Calu3 (cell line): ENCODE measurements at regions of chr6 and their contacts with region 1.

Region 1: DNA sequence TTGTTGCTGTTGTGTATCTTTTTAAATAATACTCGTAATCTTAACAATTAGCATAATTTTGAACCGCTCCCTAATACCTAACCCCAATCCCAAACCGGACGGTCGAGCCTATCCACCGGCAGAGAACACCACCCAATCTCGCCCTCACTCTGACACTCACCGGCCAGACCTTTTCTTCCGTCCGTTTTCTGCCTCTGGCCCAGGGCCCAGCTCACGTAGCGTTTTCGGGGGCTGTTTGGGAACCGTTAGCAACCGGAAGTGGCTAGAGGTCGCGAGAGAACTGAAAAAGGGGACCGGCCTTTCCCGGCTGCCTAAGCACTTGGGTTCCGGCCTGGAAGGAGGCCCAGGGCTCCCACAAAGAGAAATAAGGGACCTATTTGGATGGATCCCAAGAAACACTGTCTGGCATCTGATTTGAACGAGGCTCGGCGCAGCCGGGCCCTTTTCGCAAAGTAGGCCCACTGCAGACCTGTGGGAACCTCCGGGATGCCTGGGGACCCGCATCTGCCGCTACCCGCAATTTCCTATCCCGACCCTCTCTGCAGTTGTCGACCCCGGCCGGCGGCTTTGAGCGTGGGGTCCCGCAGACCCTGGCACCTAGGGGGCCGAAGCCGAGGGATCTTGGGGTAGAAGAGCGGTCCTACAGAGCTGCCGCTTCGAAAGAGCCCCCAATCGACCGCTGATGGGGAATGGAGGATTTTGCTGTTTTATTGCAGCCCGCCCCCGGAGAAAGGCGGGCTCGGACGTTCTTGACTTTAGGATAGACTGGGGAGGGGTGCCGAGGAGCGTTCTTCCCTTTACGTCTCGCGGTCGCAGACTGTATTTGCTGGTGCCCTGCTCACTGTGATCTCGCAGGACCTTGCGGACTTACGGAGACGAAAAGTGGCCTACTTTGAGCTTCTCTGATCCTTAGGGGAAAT is 4.8 kb upstream of the ZKSCAN8 start:
- DNase-seq: peak; percentile 90
- H3K4me3 Mint-ChIP-seq: peak overlapping the region; percentile 97
- H3K27ac Mint-ChIP-seq: peak overlapping the region; percentile 93
- H3K4me1 Mint-ChIP-seq: peaks cover 30% of the 10 kb centered on the region
- H3K27me3 Mint-ChIP-seq: no peaks in the 10 kb centered on the region
- CTCF ChIP-seq: no peak

Region 2: DNA sequence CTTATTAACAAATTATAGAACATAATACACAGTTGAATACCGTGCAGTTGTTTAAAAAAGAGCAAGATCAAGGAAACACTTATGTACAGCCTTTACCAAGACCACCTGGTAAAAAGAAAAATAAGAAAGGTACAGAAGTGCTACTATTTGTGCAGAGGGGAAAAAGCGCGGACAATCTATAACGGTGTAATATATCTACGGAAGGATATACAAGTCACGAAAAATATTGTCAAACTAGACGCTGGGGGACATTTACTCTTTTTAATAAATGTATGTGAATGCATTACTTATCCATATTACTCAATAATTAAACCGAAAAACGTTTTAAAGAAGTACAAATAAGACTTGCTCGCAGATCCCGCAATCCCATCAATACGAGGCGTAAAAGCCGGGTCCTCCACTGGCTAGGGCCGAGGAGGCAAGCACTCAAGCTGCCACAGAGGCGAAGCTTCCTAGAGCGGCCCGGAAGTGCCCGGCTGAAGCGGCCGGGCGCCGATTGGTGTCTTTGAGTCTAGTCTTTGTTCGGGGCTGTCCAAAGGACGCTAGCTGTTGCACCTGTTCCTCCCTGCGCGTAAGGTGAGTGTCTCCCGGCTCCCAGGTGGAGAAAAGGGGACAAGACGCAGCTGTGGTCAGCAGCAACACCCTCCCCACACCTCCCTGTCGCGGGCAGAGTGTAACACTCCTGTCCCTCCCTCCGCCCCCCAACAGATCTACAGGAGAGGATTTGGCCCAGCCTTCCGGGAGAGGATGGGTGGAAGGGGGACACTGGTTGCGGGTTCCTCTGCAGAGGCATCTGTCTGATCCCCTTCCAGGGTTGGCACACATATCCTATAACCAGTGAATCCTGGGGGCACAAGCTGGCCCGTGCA is 12.5 kb before region 1 on chr6 and contains the start of gene ZSCAN16:
- CTCF ChIA-PET with region 1: interaction called, 13 read pairs
- intact Hi-C with region 1: loop called (anchors 1 kb)
- DNase-seq: peak; percentile 91
- H3K4me3 Mint-ChIP-seq: peak within 1 kb of the TSS; percentile 85
- H3K27ac Mint-ChIP-seq: peak within 1 kb of the TSS; percentile 48
- H3K4me1 Mint-ChIP-seq: peaks cover 22% of the 10 kb centered on the region
- H3K27me3 Mint-ChIP-seq: no peaks in the 10 kb centered on the region
- CTCF ChIP-seq: no peak
- total RNA-seq, gene ZSCAN16: 14.2 and 15.9 TPM in 2 replicates

Region 3: GRCh38 chr6:28212510-28213212 is 75.8 kb after region 1 on chr6:
- CTCF ChIA-PET with region 1: no interaction called
- intact Hi-C with region 1: loop called (anchors 2 kb)
- DNase-seq: peak; percentile 90
- H3K4me3 Mint-ChIP-seq: peak overlapping the region; percentile 71
- H3K27ac Mint-ChIP-seq: peak overlapping the region; percentile 68
- H3K4me1 Mint-ChIP-seq: peaks cover 17% of the 10 kb centered on the region
- H3K27me3 Mint-ChIP-seq: no peaks in the 10 kb centered on the region
- CTCF ChIP-seq: no peak

Region 4: GRCh38 chr6:28225056-28225834 is 88.4 kb after region 1 on chr6 and contains the start of gene ZSCAN9:
- CTCF ChIA-PET with region 1: no interaction called
- intact Hi-C with region 1: loop called (anchors 2 kb)
- DNase-seq: peak; percentile 90
- H3K4me3 Mint-ChIP-seq: peak within 1 kb of the TSS; percentile 93
- H3K27ac Mint-ChIP-seq: peak within 1 kb of the TSS; percentile 73
- H3K4me1 Mint-ChIP-seq: no peaks in the 10 kb centered on the region
- H3K27me3 Mint-ChIP-seq: no peaks in the 10 kb centered on the region
- CTCF ChIP-seq: no peak
- total RNA-seq, gene ZSCAN9: 24.6 and 25.8 TPM in 2 replicates

Region 5: DNA sequence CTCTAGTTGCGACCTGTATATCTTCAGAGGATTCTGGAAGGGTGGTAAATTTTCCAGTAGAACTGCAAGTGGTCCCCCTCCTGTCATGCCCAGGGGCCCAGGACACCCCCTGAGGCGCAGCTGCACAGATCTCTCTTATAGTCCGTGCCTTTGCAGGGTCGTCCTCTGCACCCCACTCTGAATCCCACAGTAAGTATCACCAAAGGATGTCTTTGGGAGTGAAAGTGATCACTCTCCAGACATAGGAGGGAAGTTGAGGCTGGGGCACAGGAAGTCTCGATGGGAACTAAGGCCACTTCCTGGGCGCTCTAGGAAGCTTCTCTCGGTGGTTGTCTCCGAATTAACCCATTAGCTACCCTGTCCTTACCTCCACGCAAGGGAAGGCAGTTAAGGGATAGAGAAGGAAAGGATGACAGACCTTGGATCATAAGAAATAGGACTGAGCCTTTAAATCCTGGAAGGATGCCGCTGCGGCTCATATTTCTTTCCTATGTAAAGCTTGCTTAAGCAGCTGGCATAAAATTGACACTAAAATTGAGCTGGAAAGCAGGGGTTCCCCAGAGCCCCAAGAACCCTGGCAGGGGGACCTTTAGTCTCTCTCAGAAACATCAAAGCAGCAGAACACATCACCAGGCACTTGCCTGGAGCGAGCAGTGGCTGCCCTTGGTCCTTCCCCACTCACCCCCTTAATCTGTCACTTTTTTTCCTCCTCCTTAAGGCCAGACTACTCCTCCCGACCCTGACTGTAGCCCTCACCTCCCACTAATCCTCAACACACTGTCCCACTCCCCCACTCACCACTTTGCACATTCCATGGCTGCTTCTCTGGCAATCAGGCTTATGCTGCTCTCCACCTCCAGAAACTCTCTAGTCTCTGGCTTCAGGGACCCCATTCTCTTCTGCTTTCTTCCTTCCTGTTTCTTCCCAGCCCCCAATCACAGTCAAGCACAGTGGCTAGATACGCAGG is 115.4 kb after region 1 on chr6 and contains the start of gene ZKSCAN4:
- CTCF ChIA-PET with region 1: interaction called, 5 read pairs
- intact Hi-C with region 1: loop called (anchors 2 kb)
- DNase-seq: peak; percentile 84
- H3K4me3 Mint-ChIP-seq: peak within 1 kb of the TSS; percentile 100
- H3K27ac Mint-ChIP-seq: peak within 1 kb of the TSS; percentile 64
- H3K4me1 Mint-ChIP-seq: peaks cover 10% of the 10 kb centered on the region
- H3K27me3 Mint-ChIP-seq: no peaks in the 10 kb centered on the region
- CTCF ChIP-seq: no peak
- total RNA-seq, gene ZKSCAN4: 6.1 and 6.7 TPM in 2 replicates

Region 6: GRCh38 chr6:28683944-28684538 is 547.2 kb after region 1 on chr6:
- CTCF ChIA-PET with region 1: no interaction called
- intact Hi-C with region 1: loop called (anchors 5 kb)
- DNase-seq: peak; percentile 48
- H3K4me3 Mint-ChIP-seq: peak overlapping the region; percentile 65
- H3K27ac Mint-ChIP-seq: no peak overlapping the region
- H3K4me1 Mint-ChIP-seq: peaks cover 35% of the 10 kb centered on the region
- H3K27me3 Mint-ChIP-seq: no peaks in the 10 kb centered on the region
- CTCF ChIP-seq: peak; percentile 85